Heart left ventricle (tissue), 16 donors: ENCODE measurements at regions of chr5 and their contacts with region 1.

Region 1: DNA sequence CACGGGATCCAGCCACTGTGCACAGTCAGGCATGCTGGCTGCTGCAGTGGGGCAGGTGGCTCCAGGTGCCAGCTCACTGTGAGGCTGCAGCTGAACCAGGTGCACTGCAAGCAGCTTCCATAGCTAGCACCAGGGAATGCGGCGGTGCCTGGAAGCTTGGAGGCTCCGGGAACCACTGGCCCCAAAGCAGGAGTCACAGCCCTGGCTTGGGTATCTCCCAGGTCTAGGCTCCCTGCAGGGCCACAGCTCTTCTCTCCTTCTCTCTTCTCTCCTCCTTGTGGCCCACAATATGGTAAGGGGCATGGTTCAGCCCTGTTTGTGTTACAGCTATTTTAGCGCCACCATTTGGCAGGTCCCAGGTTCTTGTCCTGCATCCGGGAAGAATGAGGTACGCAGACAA is 6.7 kb upstream of the MTMR12 start:
- DNase-seq: no peak
- ATAC-seq: no peak
- H3K4me3 ChIP-seq: no peak overlapping the region
- H3K27ac ChIP-seq: no peak overlapping the region
- H3K4me1 ChIP-seq: no peaks in the 10 kb centered on the region
- H3K27me3 ChIP-seq: no peaks in the 10 kb centered on the region
- CTCF ChIP-seq: no peak
- POLR2A ChIP-seq: no peak

Region 2: GRCh38 chr5:31944684-31945445 is 374.5 kb before region 1 on chr5:
- intact Hi-C with region 1: no loop called
- DNase-seq: no peak
- ATAC-seq: peak in 3 of 4 donors; percentile 18 to 31 (median 27)
- H3K4me3 ChIP-seq: no peak overlapping the region
- H3K27ac ChIP-seq: peak overlapping the region in 1 of 12 donors; percentile 5
- H3K4me1 ChIP-seq: peaks cover 0 to 54% (median 19%) of the 10 kb centered on the region in 12 donors
- H3K27me3 ChIP-seq: no peaks in the 10 kb centered on the region
- CTCF ChIP-seq: no peak
- POLR2A ChIP-seq: no peak

Region 3: GRCh38 chr5:32241034-32241783 is 78.2 kb before region 1 on chr5:
- intact Hi-C with region 1: loop called in 2 of 10 experiments (anchors 5 kb)
- DNase-seq: no peak
- ATAC-seq: no peak
- H3K4me3 ChIP-seq: no peak overlapping the region
- H3K27ac ChIP-seq: no peak overlapping the region
- H3K4me1 ChIP-seq: no peaks in the 10 kb centered on the region
- H3K27me3 ChIP-seq: no peaks in the 10 kb centered on the region
- CTCF ChIP-seq: no peak
- POLR2A ChIP-seq: no peak

Region 4: DNA sequence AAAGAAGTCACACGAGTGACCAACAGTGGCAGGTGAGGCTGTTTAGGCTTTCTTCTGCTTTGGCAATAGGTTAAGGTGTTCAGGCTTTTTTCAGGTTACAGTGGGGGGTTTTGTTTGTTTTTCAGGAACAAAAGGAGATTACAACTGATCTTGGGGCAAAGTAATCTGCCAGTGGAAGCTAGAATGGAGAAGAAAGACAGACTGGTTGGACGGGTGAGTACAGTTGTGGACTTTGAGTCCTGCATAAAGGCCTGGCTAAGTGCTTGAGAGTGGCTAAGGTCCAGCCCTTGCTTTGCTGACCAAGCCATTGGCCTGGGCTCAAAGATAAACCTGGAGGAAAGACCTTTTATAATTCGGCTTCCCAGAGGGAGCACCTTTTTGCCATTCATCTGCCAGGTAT is 69.7 kb before region 1 on chr5:
- intact Hi-C with region 1: loop called in 2 of 10 experiments (anchors 5 to 10 kb)
- DNase-seq: no peak
- ATAC-seq: no peak
- H3K4me3 ChIP-seq: no peak overlapping the region
- H3K27ac ChIP-seq: no peak overlapping the region
- H3K4me1 ChIP-seq: peaks cover 0 to under 1% (median 0%) of the 10 kb centered on the region in 12 donors
- H3K27me3 ChIP-seq: no peaks in the 10 kb centered on the region
- CTCF ChIP-seq: no peak
- POLR2A ChIP-seq: no peak

Region 5: DNA sequence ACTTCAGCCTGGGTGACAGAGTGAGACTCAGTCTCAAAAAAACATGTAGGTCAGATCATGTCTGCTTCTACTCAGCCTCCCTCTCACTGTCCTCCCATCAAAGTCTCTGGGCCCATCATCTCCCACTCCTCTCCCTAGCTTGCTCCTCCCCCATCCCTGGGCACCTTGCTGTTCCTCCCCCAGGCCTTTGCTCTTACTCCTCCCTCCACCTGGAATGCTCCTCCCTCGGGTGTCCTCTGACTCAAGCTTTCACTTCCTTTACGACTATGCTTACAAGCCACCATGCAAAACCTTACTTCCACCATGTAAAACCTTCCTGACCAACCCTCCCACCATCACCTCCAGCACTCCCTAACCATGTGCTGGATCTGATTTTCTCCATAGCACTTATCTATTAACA is 58.2 kb before region 1 on chr5:
- intact Hi-C with region 1: loop called in 2 of 10 experiments (anchors 5 to 10 kb)
- DNase-seq: no peak
- ATAC-seq: peak in 1 of 4 donors; percentile 19
- H3K4me3 ChIP-seq: no peak overlapping the region
- H3K27ac ChIP-seq: peak overlapping the region in 2 of 12 donors; percentile 6 to 52
- H3K4me1 ChIP-seq: peaks cover 0 to 26% (median 8%) of the 10 kb centered on the region in 12 donors
- H3K27me3 ChIP-seq: no peaks in the 10 kb centered on the region
- CTCF ChIP-seq: no peak
- POLR2A ChIP-seq: no peak

Region 6: DNA sequence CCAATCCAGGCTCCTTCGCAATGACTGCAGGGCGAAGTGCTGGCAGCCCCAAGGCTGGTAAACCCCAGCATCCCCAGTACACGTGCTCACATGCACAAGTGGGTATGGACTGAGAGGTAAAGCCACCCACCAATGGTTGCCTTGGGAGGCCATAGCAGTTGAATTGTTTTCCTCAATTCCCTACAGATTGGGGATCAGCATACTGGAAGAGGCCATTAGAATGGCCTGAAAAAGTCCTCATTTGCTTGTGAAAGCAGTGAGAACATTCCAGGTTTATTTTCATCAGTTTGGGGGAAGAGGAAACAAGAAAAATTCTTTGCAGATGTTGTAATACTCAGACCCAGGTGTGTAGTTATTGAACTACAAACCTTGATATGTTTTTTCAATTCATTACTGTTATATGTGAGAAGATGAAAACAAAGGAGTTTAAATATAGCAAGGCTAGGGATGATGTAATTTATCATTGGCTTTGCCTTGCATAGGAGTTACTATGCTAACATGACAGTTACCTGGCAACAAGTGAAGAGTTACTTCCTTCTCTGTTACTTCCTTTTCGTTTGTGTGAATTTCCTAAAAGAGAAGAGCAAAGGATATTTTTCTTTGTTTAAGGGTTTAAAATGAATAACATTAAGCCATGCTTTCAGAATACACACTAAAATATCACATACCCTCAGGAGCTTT is 43.1 kb before region 1 on chr5:
- intact Hi-C with region 1: loop called in 5 of 10 experiments (anchors 5 kb)
- DNase-seq: no peak
- ATAC-seq: peak; percentile 67 to 82 (median 70)
- H3K4me3 ChIP-seq: no peak overlapping the region
- H3K27ac ChIP-seq: peak overlapping the region in 9 of 12 donors; percentile 26 to 76 (median 56)
- H3K4me1 ChIP-seq: peaks cover 5 to 58% (median 43%) of the 10 kb centered on the region in 12 donors
- H3K27me3 ChIP-seq: no peaks in the 10 kb centered on the region
- CTCF ChIP-seq: no peak
- POLR2A ChIP-seq: no peak